Common myeloid progenitor, CD34-positive (primary cell): ENCODE measurements at regions of chr10 and their contacts with region 1.

Region 1: DNA sequence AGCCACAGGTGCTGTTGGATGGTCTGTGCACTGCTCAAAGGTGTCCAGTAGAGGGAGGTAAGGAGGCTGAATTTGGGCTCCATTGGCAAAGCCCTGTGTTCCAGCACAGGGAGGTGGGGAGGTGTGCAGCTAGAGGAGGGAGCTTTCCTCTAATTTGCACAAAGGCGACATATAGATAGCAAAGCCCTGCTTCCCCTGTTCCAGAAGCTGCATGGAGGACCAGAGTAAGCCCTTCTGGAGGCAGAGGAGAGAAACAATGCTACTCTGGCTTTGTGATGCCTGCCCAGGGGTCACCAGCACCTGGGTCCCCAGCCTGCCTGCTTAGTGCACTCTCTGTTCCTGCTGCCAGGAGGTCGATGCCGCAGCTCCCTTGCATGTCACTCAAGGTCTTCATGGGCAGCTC is 3.4 kb upstream of the ARHGAP22 start:
- DNase-seq: peak; percentile 38 to 60 (median 55)
- H3K4me3 ChIP-seq: no peak overlapping the region
- H3K27ac ChIP-seq: no peak overlapping the region
- H3K4me1 ChIP-seq: peaks cover 0 to 28% (median 23%) of the 10 kb centered on the region in 4 experiments
- H3K27me3 ChIP-seq: peaks cover 2 to 20% (median 6%) of the 10 kb centered on the region in 5 experiments

Region 2: GRCh38 chr10:48205918-48206317 is 402.4 kb before region 1 on chr10:
- CTCF ChIA-PET with region 1: no interaction called
- POLR2A ChIA-PET with region 1: no interaction called
- DNase-seq: no peak
- H3K4me3 ChIP-seq: no peak overlapping the region
- H3K27ac ChIP-seq: no peak overlapping the region
- H3K4me1 ChIP-seq: no peaks in the 10 kb centered on the region
- H3K27me3 ChIP-seq: no peaks in the 10 kb centered on the region

Region 3: GRCh38 chr10:48541144-48541795 is 67.0 kb before region 1 on chr10:
- CTCF ChIA-PET with region 1: interaction called, 16 read pairs
- POLR2A ChIA-PET with region 1: no interaction called
- DNase-seq: no peak
- H3K4me3 ChIP-seq: no peak overlapping the region
- H3K27ac ChIP-seq: no peak overlapping the region
- H3K4me1 ChIP-seq: no peaks in the 10 kb centered on the region
- H3K27me3 ChIP-seq: no peaks in the 10 kb centered on the region

Region 4: GRCh38 chr10:48551861-48552591 is 56.3 kb before region 1 on chr10:
- CTCF ChIA-PET with region 1: interaction called, 47 read pairs
- POLR2A ChIA-PET with region 1: no interaction called
- DNase-seq: peak; percentile 66 to 83 (median 79)
- H3K4me3 ChIP-seq: peak overlapping the region in 1 of 7 experiments; percentile 17
- H3K27ac ChIP-seq: no peak overlapping the region
- H3K4me1 ChIP-seq: peaks cover 0 to 11% (median 6%) of the 10 kb centered on the region in 4 experiments
- H3K27me3 ChIP-seq: no peaks in the 10 kb centered on the region

Region 5: DNA sequence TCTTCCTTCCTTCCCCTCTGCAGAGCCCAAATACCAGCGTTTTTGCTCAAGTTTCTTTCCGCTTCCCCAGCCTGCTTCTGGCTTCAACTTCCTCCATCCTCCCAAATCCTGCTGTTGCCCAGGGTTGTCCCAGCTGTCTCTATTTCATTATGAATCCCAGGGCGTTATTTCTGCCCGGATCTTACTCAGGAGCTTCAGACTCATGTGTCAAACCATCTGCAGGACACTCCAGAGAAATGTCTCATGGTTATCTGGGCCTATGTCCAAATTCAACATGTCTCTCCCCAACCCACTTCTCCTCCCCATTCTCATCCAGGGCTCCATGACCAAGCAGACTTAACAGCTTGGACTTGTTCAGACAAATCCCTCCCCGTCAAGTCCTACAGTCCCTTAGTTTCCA is 19.0 kb before region 1 on chr10:
- CTCF ChIA-PET with region 1: interaction called, 30 read pairs
- POLR2A ChIA-PET with region 1: no interaction called
- DNase-seq: no peak
- H3K4me3 ChIP-seq: no peak overlapping the region
- H3K27ac ChIP-seq: no peak overlapping the region
- H3K4me1 ChIP-seq: no peaks in the 10 kb centered on the region
- H3K27me3 ChIP-seq: no peaks in the 10 kb centered on the region

Region 6: DNA sequence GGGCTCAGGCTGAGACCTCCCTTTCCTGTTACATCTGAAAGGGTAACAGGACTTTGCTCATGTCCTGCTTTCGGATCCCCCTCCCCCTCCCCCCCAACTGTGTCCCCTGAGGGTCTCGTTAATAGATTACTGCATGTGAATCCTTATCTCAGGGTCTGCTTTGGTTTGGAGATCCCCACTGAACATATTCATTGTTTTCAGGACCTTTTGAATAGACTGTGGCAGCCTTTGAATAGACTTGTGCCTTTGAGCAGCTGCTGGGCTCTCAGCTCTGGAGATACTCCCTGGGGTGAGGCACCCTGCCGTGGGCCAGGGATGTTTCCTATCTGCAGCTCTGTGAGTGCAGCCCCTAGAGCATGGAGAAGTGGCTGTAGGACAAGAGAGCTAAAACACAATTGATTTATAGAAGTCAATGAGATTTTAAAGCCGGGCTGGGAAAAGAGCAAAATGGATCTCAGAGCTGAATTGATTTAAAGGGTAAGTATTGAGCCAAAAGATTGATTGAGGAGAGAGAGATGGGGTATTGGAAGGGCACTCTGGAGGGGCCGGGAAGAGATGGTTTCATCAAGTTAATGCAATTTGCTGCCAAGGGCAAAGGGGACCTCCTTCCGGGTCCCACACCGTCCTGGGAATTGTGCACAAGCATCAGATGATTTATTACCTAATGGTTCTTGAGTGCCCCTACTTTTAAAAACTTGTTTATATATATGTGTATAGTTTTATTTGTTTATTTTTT is 13.3 kb before region 1 on chr10:
- CTCF ChIA-PET with region 1: interaction called, 10 read pairs
- POLR2A ChIA-PET with region 1: no interaction called
- DNase-seq: no peak
- H3K4me3 ChIP-seq: no peak overlapping the region
- H3K27ac ChIP-seq: no peak overlapping the region
- H3K4me1 ChIP-seq: no peaks in the 10 kb centered on the region
- H3K27me3 ChIP-seq: no peaks in the 10 kb centered on the region

Region 7: DNA sequence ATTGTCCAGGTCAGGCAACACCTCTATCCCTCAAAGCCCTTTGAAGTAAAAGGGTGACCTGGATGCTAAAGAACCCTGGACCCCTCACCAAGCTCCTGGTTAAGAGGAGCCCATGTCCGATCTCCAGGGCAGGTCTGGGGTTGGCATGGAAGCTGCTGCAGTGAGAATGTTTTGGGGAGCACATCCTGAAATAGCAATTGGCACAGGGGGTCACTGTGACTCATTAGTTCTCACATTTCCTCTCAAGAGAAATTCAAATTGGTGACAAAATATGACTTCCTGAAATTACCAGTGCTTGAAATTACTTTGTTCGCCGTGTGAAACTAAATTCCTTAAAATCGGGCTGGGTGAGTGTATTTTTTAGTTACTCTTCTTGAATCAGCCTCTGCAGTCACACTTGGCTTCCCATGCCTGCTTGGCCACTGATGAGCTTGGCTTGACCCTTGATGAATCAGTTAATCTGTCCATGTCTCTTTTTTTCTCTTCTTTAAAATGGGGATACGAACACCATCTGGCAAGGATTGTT is 15.4 kb after region 1 on chr10:
- CTCF ChIA-PET with region 1: interaction called, 79 read pairs
- POLR2A ChIA-PET with region 1: no interaction called
- DNase-seq: peak; percentile 24 to 83 (median 71)
- H3K4me3 ChIP-seq: peak overlapping the region in 2 of 7 experiments; percentile 19 to 31
- H3K27ac ChIP-seq: no peak overlapping the region
- H3K4me1 ChIP-seq: peaks cover 0 to 14% (median 10%) of the 10 kb centered on the region in 4 experiments
- H3K27me3 ChIP-seq: no peaks in the 10 kb centered on the region

Region 8: DNA sequence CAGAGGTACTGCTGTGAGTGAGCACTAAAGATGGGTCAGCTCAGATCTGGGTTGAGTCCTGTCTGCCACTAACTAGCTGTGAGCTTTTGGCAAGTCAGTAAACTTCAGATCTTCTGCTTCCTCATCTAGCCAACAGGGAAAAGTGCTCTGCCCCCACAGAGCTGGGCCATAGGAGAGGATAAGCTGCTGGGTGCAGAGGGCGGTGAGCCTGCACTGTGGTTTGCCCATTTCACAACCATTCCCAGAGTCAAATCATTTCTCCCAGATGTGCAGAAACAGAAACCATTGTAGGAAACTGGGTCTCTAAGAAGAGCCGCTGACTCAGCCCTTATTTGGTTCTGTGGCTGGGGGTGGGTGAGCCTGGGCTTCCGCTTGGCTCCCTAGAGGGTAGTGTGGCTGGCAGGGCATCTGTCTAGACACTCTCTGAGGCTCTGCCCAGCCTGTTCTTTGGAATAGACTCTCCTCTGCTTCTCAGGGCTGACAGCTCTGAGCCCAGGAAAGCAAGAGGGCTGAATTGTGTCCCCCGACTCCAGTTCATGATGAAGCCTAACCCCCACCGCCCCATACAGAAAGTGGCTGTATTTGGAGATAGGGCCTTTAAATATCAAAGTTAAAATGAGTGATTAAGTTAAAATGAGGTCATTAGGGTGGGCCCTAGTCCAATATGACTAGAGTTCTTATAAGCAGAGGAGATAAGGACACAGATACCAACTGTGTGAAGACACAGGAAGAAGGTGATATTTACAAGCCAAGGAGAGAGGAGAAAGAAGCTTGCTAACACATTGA is 26.1 kb after region 1 on chr10:
- CTCF ChIA-PET with region 1: interaction called, 43 read pairs
- POLR2A ChIA-PET with region 1: no interaction called
- DNase-seq: peak; percentile 87 to 93 (median 92)
- H3K4me3 ChIP-seq: peak overlapping the region in 3 of 7 experiments; percentile 8 to 39 (median 14)
- H3K27ac ChIP-seq: peak overlapping the region in 1 of 2 experiments; percentile 60
- H3K4me1 ChIP-seq: peaks cover 8 to 58% (median 44%) of the 10 kb centered on the region in 4 experiments
- H3K27me3 ChIP-seq: no peaks in the 10 kb centered on the region

Region 9: GRCh38 chr10:48708144-48708543 is 99.9 kb after region 1 on chr10:
- CTCF ChIA-PET with region 1: no interaction called
- POLR2A ChIA-PET with region 1: no interaction called
- DNase-seq: no peak
- H3K4me3 ChIP-seq: no peak overlapping the region
- H3K27ac ChIP-seq: no peak overlapping the region
- H3K4me1 ChIP-seq: peaks cover 0 to 6% (median 0%) of the 10 kb centered on the region in 4 experiments
- H3K27me3 ChIP-seq: no peaks in the 10 kb centered on the region

Region 10: DNA sequence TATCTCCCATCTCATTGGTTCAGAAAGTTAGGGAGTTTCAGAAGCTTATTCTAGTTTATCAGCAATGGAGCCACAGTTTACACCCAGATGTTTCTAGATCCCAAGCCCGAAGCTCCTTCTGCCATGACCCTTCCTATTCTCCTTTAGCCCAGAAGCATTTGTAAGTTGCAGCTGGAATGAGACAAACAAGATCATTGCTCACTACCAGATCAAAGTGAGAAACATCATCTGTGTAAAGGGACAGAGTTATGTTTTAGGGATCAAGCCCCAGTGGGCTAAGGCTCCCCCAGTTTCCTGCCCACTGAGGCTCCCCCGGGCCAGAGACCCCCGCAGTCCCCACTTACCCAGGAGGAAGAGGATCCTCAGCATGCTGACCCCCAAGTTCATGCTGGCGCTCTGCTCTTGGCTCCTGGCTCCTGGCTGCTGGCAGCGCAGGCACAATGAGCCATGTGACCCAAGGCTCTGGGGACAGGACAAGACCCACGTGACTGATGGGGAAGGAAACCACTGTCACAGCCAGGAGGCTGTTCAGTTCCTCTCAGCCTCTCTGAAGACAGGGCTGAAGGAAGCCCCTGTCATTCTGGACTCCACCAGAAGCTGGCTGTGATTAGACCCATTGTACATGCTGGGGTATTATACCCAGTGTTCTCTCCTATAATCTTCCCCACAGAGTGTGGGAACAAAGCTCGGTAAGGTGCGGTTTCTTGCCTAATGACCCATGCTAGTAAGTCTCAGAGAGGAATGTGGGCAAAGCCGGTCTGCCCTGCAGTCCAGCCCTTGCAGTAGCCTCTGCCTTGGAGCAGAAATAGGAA is 579.9 kb after region 1 on chr10 and contains the start of gene TMEM273:
- CTCF ChIA-PET with region 1: no interaction called
- POLR2A ChIA-PET with region 1: no interaction called
- DNase-seq: peak; percentile 44 to 77 (median 72)
- H3K4me3 ChIP-seq: peak within 1 kb of the TSS in 3 of 7 experiments; percentile 22 to 75 (median 29)
- H3K27ac ChIP-seq: peak within 1 kb of the TSS in 1 of 2 experiments; percentile 54
- H3K4me1 ChIP-seq: peaks cover 43 to 80% (median 53%) of the 10 kb centered on the region in 4 experiments
- H3K27me3 ChIP-seq: no peaks in the 10 kb centered on the region